ENCODE measurements at regions of chr17 and their contacts with region 1.

Region 1: DNA sequence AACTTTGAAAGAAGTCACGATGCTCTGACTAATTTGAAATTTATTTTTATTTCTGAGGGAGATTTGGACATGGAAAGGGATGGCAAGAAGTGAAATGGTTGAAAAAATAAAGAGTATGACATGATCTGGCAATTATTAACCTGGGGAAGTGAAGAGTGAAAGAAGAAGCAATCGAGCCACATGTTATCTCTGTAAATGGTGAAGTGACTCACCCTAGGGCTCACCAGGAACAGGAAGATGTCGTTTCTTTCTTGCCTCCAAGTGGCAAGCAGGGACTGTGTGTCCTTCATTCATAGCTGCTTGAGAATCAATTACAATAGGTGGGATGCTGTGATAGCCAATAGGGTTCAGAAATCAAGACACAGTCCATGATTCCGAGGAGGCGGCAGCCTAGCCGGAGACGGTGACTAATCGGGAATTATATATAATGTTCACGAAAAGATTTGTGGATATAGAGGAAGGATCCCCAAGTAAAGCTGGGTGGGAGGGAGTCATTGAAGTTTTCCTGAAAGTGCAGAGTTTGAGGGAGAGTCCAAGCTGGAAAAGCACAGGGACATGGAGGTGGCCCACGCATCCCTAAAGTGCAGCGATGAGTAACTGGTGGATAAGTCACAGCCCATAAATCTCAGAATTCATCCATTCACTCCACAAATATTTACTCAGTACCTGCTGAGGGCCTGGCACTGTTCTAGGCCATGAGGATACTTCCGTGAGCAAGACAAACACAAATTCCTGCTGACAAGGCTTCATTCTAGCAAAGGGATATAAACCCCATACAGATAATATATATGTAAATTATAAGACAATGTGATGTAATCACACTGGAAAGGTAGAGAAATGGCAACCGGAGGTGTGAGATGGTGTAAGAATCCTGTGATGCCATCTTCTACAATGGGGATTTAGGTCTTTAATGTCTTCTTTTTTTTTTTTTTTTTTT is 18.4 kb upstream of the KRT20 start:
- DNase-seq: peak; percentile 94 to 96
- ATAC-seq: peak; percentile 86 to 91
- H3K4me3 ChIP-seq: peak overlapping the region; percentile 33
- H3K27ac ChIP-seq: peak overlapping the region; percentile 91 to 93
- H3K4me1 ChIP-seq: peaks cover 34% of the 10 kb centered on the region
- CTCF ChIP-seq: no peak
- EP300 ChIP-seq: peak; percentile 71 to 74; a peak in 4 of 5 replicates
- POLR2A ChIP-seq: no peak
- RAD21 ChIP-seq: peak; percentile 2 to 29; a peak in 1 of 5 replicates

Region 2: DNA sequence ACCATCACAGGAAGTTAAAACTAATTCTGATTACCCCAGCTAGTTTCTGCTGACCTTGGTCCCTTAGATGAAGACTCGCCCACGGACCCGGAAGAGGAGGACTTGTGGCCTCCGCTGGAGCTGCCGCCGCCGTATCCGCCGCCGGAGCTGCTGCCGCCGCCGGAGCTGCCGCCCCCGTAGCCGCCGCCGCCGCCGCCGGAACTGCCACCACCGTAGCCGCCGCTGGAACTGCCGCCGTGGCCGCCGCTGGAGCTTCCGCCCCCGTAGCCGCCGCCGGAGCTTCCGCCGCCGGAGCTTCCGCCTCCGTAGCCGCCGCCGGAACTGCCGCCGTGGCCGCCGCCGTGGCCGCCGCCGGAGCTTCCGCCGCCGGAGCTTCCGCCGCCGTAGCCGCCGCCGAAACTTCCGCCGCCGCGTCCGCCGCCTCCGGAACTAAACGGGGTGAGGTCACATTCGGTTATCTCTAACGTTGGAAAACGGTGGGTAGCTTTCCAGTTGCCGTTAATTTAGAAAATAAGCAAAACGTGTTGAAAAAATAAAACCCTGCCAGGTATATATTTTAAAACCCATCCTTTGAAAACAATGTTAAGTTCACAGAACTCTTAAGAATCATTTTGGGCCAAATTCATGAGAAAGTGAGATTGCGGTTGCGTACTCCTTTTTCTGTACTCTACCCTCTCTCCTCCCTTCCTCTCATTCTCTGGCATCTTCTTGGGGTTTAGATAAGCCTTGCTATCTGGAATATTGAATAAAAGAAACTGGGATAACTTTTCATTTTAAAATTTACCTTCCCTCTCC is 84.5 kb before region 1 on chr17:
- CTCF ChIA-PET with region 1: interaction called, 5 read pairs
- POLR2A ChIA-PET with region 1: interaction called, 15 read pairs
- DNase-seq: peak; percentile 80 to 88
- ATAC-seq: peak; percentile 93 to 95
- H3K4me3 ChIP-seq: peak overlapping the region; percentile 79
- H3K27ac ChIP-seq: peak overlapping the region; percentile 86 to 94
- H3K4me1 ChIP-seq: peaks cover 16% of the 10 kb centered on the region
- CTCF ChIP-seq: no peak
- EP300 ChIP-seq: no peak
- POLR2A ChIP-seq: peak; percentile 41
- RAD21 ChIP-seq: no peak; a peak in 1 of 5 replicates

Region 3: GRCh38 chr17:40884708-40885512 is 18.5 kb before region 1 on chr17 and contains the start of gene KRT20:
- CTCF ChIA-PET with region 1: interaction called, 29 read pairs
- POLR2A ChIA-PET with region 1: no interaction called
- DNase-seq: peak in 1 of 2 experiments; percentile 64
- ATAC-seq: peak; percentile 62 to 79; a peak in 4 of 6 replicates
- H3K4me3 ChIP-seq: no peak within 1 kb of the TSS
- H3K27ac ChIP-seq: peak within 1 kb of the TSS in 1 of 2 experiments; percentile 31; a peak in 1 of 6 replicates
- H3K4me1 ChIP-seq: peaks cover 15% of the 10 kb centered on the region
- CTCF ChIP-seq: 0 out of 3 replicates have a peak, but pooled peaks have one; percentile 17
- EP300 ChIP-seq: no peak
- POLR2A ChIP-seq: no peak
- RAD21 ChIP-seq: no peak
- polyA plus RNA-seq, gene KRT20: 0.28 and 0.34 TPM in 2 replicates

Region 4: DNA sequence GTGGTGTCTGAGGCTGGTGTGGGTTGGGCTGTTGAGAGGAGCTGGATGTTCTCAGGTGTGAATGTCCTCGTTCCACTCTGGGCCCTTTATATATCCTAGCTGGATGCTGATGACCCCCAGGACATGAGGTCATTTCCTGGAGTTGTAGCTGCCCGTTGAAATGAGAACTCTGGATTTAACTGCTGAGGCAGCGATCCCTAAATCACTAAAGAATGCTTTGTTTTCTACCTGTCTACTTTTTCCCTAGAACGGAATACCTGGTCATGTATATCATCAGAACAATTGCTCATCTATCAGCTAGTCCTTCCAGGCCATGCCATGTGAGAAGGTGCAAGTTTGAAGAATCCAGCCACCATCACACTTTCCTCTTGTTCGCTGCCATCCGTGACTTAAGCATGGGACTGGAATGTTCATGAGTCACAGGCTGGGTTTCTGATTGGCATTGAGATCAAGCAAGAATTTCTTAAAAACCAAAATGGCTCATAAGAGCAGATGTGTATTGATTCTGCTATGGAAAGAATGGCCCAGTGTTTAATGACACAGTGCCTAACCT is 156.7 kb after region 1 on chr17 and contains the start of gene KRTAP2-3:
- CTCF ChIA-PET with region 1: no interaction called
- POLR2A ChIA-PET with region 1: no interaction called
- DNase-seq: peak; percentile 49 to 55
- ATAC-seq: peak; percentile 55 to 57; a peak in 4 of 6 replicates
- H3K4me3 ChIP-seq: no peak within 1 kb of the TSS
- H3K27ac ChIP-seq: peak within 1 kb of the TSS; percentile 34 to 70; a peak in 5 of 6 replicates
- H3K4me1 ChIP-seq: peaks cover 34% of the 10 kb centered on the region
- CTCF ChIP-seq: no peak
- EP300 ChIP-seq: no peak
- POLR2A ChIP-seq: no peak
- RAD21 ChIP-seq: no peak
- polyA plus RNA-seq, gene KRTAP2-3: not detected in 2 replicates